CD4-positive, alpha-beta T cell (primary cell): ENCODE measurements at regions of chr1 and their contacts with region 1.

Region 1: GRCh38 chr1:9867408-9868243 is 42.4 kb downstream of the CTNNBIP1 start:
- DNase-seq: peak; percentile 80 to 94 (median 88)
- ATAC-seq: peak; percentile 100
- H3K4me3 ChIP-seq: no peak overlapping the region
- H3K4me3 Mint-ChIP-seq: no peak overlapping the region
- H3K27ac ChIP-seq: no peak overlapping the region
- H3K27ac Mint-ChIP-seq: no peak overlapping the region
- H3K4me1 ChIP-seq: peaks cover 10% of the 10 kb centered on the region
- H3K4me1 Mint-ChIP-seq: peaks cover 5% of the 10 kb centered on the region
- H3K27me3 ChIP-seq: no peaks in the 10 kb centered on the region
- H3K27me3 Mint-ChIP-seq: no peaks in the 10 kb centered on the region
- CTCF ChIP-seq: peak; percentile 94

Region 2: DNA sequence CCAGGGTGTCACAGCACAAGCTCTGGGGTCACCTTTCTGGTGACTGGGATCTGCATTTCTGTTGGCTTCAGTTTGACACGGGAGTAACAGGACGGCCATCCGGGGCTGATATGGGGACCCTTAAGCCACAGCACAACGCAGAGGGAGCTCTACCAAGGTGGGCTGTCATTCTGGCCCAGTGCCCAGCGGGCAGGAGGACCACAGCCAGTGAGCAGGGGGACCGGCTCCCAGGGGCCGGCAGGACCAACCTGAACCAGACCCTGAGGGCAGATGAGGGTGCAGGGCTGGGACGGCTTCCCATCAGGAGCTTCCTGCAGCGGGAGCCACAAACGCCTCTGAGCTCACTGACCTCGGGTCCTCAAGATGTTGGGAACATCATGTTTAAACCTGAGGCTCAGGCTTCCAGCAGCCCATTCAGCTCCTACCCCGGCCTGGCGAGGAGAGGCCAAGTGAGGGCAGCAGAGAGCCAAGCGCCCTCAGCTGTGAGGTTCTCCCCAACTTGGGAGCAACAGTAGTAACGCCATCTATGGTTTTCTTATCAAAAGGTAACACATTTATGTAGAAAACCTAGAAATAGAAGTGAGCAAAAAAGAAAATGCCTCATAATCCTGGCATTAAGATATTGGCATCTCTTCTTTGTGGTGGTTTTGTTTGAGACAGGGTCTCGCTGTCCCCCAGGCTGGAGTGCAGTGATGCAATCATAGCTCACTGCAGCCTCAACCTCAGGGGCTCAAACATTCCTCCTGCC is 252.1 kb before region 1 on chr1:
- CTCF ChIA-PET with region 1: interaction called, 7 read pairs
- POLR2A ChIA-PET with region 1: interaction called, 3 read pairs
- intact Hi-C with region 1: loop called in 1 of 2 experiments (anchors 1 kb)
- DNase-seq: peak; percentile 42 to 75 (median 54)
- ATAC-seq: peak; percentile 92
- H3K4me3 ChIP-seq: no peak overlapping the region
- H3K4me3 Mint-ChIP-seq: no peak overlapping the region
- H3K27ac ChIP-seq: no peak overlapping the region
- H3K27ac Mint-ChIP-seq: no peak overlapping the region
- H3K4me1 ChIP-seq: peaks cover 5% of the 10 kb centered on the region
- H3K4me1 Mint-ChIP-seq: no peaks in the 10 kb centered on the region
- H3K27me3 ChIP-seq: no peaks in the 10 kb centered on the region
- H3K27me3 Mint-ChIP-seq: peaks cover 5% of the 10 kb centered on the region
- CTCF ChIP-seq: peak; percentile 81